ENCODE measurements at regions of chr1 and their contacts with region 1.

Region 1: GRCh38 chr1:35443768-35444518 is 113.3 kb downstream of the KIAA0319L start:
- DNase-seq: no peak
- H3K4me3 ChIP-seq: no peak overlapping the region
- H3K27ac ChIP-seq: no peak overlapping the region
- H3K4me1 ChIP-seq: no peaks in the 10 kb centered on the region
- H3K27me3 ChIP-seq: no peaks in the 10 kb centered on the region
- CTCF ChIP-seq: peak; percentile 14 to 42 (median 41)
- EP300 ChIP-seq: no peak
- POLR2A ChIP-seq: no peak
- RAD21 ChIP-seq: peak; percentile 71 to 72

Region 2: DNA sequence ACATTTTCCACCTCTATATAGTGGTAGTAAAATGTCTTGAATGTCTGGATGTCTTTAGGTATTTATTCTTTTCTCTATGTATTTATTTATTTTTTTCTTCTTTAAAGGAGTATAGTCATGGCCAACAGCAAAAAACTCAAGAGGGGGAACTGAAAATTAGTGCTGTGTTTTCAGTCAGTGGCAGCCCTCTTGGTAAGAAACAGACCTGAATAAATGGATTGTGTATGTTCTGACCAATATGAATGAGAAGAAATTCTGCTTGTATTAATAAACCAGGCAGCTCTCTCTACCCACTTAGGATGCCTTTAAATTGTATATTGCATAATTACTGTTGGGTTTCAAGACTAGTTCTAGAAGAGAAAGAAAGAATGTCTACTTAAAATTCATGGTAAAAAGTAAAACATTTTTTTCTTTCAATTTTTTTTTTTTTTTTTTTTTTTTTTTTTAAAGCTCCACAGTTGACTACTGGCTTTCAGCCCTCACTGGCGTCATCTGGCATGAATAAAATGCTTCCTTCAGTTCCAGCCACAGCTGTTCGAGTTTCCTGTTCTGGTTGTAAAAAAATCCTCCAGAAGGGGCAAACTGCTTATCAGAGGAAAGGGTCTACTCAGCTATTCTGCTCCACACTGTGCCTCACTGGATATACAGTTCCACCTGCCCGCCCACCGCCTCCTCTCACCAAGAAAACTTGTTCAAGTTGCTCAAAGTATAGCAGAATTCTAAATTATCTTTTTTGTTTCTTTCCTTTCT is 73.8 kb before region 1 on chr1:
- CTCF ChIA-PET with region 1: no interaction called
- POLR2A ChIA-PET with region 1: no interaction called
- DNase-seq: no peak
- H3K4me3 ChIP-seq: no peak overlapping the region
- H3K27ac ChIP-seq: no peak overlapping the region
- H3K4me1 ChIP-seq: no peaks in the 10 kb centered on the region
- H3K27me3 ChIP-seq: no peaks in the 10 kb centered on the region
- CTCF ChIP-seq: no peak
- EP300 ChIP-seq: no peak
- POLR2A ChIP-seq: no peak
- RAD21 ChIP-seq: no peak

Region 3: DNA sequence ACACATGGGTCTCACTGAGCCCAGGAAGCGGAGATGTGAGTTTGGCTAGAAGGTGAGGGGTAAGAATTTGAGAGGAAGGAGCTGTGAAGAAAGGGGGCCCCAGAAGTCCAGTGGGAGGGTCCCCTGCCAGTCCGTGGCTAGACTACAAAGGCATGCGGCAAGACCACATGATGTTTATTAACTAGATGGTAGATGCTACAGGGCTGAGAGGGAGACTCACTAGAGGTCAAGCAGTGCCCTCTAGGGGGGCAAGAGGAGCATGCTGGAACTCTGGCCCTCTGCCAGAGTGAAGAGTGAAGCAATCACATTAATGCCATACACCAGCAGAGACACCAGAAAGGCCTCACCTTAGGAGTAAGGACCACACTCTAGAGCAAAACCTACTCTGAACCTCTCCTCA is 101.0 kb after region 1 on chr1:
- CTCF ChIA-PET with region 1: interaction called, 95 read pairs
- POLR2A ChIA-PET with region 1: no interaction called
- DNase-seq: peak in 1 of 2 experiments; percentile 46
- H3K4me3 ChIP-seq: no peak overlapping the region
- H3K27ac ChIP-seq: no peak overlapping the region
- H3K4me1 ChIP-seq: peaks cover 0 to 3% (median 0%) of the 10 kb centered on the region in 4 experiments; a peak in 1 of 7 replicates
- H3K27me3 ChIP-seq: no peaks in the 10 kb centered on the region
- CTCF ChIP-seq: peak; percentile 67 to 94 (median 80)
- EP300 ChIP-seq: no peak
- POLR2A ChIP-seq: no peak
- RAD21 ChIP-seq: peak; percentile 92

Measured in H1 (cell line).